A673 (cell line): ENCODE measurements at regions of chr5 and their contacts with region 1.

Region 1: DNA sequence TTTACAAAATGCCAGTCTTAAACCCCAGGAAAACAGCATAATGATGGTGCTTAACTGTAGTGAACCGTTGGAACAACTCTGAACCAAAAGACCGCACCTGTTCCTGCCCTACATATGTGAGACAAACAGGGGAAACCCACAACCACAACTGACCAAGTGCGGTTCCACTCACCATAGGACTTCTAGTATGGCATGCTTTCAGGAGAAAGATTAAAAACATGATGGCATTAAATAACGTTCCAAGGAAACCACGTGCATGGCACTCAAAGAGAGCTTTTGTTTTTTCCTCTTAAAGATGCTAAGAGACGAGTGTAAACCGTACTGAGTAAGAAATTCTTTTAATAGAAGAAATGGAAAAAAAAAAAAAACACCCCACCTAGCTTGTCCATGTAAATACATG is 119.8 kb downstream of the SSBP2 start:
- DNase-seq: no peak
- H3K4me3 ChIP-seq: no peak overlapping the region
- H3K27ac ChIP-seq: no peak overlapping the region
- H3K4me1 ChIP-seq: peaks cover 12% of the 10 kb centered on the region
- H3K27me3 ChIP-seq: no peaks in the 10 kb centered on the region
- CTCF ChIP-seq: no peak

Region 2: GRCh38 chr5:81609810-81610375 is 21.2 kb before region 1 on chr5:
- CTCF ChIA-PET with region 1: no interaction called
- POLR2A ChIA-PET with region 1: no interaction called
- intact Hi-C with region 1: loop called (anchors 2 kb)
- DNase-seq: no peak
- H3K4me3 ChIP-seq: no peak overlapping the region
- H3K27ac ChIP-seq: no peak overlapping the region
- H3K4me1 ChIP-seq: no peaks in the 10 kb centered on the region
- H3K27me3 ChIP-seq: no peaks in the 10 kb centered on the region
- CTCF ChIP-seq: no peak